MCF 10A (cell line): ENCODE measurements at regions of chr10 and their contacts with region 1.

Region 1: DNA sequence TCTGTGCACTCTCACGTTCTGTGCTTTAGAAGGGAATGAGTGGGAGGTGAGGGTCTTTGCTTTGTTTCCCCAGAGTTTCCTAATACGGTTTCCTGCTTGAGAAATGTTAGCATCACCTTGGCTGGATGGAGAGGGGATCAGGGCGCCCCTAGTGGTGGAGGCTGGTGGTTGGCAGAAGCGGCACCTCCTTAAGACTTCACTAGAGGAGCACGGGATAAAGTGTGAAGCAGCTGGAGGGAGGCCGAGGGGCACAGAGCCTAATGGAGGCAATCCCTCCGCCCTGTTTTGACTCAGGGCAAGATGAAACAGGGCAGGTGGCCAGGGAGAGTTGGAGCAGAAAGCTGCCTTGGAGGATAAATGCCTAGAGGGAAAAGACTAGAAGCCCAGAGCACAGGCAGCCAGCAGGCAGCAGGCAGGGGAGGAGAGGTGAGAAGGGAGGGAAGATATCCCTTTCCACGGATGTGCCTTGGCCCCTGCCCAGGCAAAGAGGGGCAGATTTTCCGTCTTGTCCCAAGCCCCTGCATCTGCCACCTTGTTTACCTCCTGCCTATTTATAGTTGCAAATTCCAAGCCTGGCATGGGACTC is 56.0 kb upstream of the BTRC start:
- DNase-seq: peak; percentile 69
- H3K4me3 Mint-ChIP-seq: no peak overlapping the region
- H3K27ac Mint-ChIP-seq: no peak overlapping the region
- H3K4me1 Mint-ChIP-seq: peaks cover 10% of the 10 kb centered on the region
- H3K27me3 Mint-ChIP-seq: peaks cover 65% of the 10 kb centered on the region
- CTCF ChIP-seq: peak; percentile 72

Region 2: GRCh38 chr10:101161494-101162299 is 136.3 kb before region 1 on chr10:
- CTCF ChIA-PET with region 1: no interaction called
- POLR2A ChIA-PET with region 1: no interaction called
- intact Hi-C with region 1: loop called (anchors 2 kb)
- DNase-seq: peak; percentile 83
- H3K4me3 Mint-ChIP-seq: peak overlapping the region; percentile 63
- H3K27ac Mint-ChIP-seq: no peak overlapping the region
- H3K4me1 Mint-ChIP-seq: peaks cover 19% of the 10 kb centered on the region
- H3K27me3 Mint-ChIP-seq: peaks cover 33% of the 10 kb centered on the region
- CTCF ChIP-seq: peak; percentile 91